AG04450 (cell line): ENCODE measurements at regions of chr9 and their contacts with region 1.

Region 1: DNA sequence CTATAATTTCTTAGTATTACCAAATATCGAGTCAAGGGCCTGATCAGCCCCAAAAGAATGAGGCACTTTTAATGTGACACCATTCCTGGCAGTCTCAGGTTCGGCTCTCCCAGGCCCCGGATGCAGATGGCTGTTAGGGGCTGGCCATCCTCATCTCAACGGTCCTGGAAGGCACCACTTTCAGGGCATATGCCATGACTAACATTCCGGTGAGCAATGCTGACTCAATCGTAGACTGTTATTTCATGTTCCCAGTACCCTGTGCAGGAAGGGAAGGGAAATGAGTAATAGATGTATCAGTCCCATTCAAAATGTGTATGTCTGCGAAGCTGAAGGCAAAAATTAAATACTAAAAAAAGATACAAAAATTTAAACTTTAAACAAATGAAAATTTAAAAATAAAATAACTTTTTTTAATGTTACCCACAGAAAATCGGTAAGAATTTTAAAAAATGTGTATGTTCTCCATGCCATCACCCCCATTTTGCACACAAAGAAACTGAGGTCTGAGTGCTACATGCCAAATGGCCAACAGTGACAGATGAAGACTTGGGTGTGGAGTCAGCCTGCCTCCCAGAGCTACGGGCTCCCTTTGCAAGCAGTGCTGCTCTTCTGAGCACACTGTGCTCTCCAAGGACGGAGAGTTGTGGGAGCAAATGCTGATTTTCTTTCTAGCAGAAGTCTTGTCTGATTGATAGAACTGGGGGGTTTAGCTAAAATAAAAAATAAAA is 79.0 kb downstream of the GLDC start:
- DNase-seq: peak; percentile 86
- H3K4me3 ChIP-seq: peak overlapping the region; percentile 41
- H3K27ac ChIP-seq: peak overlapping the region; percentile 97
- H3K27me3 ChIP-seq: no peaks in the 10 kb centered on the region
- CTCF ChIP-seq: no peak

Region 2: GRCh38 chr9:6353851-6354686 is 212.5 kb before region 1 on chr9:
- CTCF ChIA-PET with region 1: interaction called, 141 read pairs
- POLR2A ChIA-PET with region 1: interaction called, 10 read pairs
- DNase-seq: peak; percentile 48
- H3K4me3 ChIP-seq: no peak overlapping the region
- H3K27ac ChIP-seq: no peak overlapping the region
- H3K27me3 ChIP-seq: no peaks in the 10 kb centered on the region
- CTCF ChIP-seq: peak; percentile 79

Region 3: DNA sequence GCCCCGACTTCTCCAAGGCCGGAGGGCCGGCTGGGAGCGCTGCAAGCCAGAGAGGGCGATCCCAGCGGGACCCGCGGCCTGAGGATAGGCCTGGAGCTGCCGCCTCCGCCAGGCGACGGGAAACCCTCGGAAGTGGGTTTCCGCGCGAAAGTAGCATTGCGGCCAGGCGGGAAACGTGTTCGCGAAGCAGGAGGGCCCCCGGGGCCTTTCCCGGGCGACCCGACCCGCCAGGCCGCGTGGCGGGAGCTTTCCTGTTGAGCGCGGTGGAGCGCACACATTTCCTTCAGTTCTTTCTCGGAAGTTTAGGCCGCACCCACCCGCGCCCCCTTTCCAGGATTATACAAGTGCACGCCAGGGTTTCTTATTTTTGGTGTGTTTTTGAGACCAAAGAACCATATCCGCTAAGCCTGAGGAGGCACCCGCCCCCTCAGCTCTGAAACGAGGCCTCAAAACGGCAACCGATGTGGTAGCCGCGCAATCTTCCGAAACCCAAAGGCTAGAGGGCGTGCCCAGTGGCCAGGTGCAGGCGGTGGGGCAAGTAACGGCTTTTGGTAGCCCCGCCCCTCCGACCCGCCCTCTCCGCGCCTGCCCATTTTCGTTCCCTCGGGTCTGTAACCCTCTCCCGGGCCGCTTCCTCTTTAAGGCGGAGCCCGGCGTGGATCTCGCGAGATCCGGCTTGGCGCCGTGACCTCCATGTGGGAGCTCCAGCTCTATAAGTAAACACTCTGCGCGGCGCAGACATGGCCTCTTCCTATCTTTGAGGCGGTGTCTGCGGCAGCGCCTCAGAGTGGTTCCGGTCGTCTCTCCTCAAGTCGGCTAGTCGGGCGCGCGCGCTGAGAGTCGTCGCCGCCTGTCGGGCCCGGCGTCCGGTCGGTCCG is 153.8 kb before region 1 on chr9 and contains the start of gene UHRF2:
- CTCF ChIA-PET with region 1: interaction called, 4 read pairs
- POLR2A ChIA-PET with region 1: interaction called, 10 read pairs
- DNase-seq: peak; percentile 94
- H3K4me3 ChIP-seq: peak within 1 kb of the TSS; percentile 91
- H3K27ac ChIP-seq: peak within 1 kb of the TSS; percentile 85
- H3K27me3 ChIP-seq: no peaks in the 10 kb centered on the region
- CTCF ChIP-seq: no peak
- polyA plus RNA-seq, gene UHRF2: 41.5 and 56.0 TPM in 2 replicates

Region 4: GRCh38 chr9:6552033-6552432 is 14.5 kb before region 1 on chr9:
- CTCF ChIA-PET with region 1: interaction called, 23 read pairs
- POLR2A ChIA-PET with region 1: interaction called, 6 read pairs
- DNase-seq: peak; percentile 69
- H3K4me3 ChIP-seq: no peak overlapping the region
- H3K27ac ChIP-seq: no peak overlapping the region
- H3K27me3 ChIP-seq: peaks cover 10% of the 10 kb centered on the region
- CTCF ChIP-seq: peak; percentile 47